Posterior vena cava (tissue), 2 donors: ENCODE measurements at regions of chr3 and their contacts with region 1.

Region 1: GRCh38 chr3:129942296-129942695 is 32.2 kb upstream of the TRH start:
- DNase-seq: no peak

Region 2: DNA sequence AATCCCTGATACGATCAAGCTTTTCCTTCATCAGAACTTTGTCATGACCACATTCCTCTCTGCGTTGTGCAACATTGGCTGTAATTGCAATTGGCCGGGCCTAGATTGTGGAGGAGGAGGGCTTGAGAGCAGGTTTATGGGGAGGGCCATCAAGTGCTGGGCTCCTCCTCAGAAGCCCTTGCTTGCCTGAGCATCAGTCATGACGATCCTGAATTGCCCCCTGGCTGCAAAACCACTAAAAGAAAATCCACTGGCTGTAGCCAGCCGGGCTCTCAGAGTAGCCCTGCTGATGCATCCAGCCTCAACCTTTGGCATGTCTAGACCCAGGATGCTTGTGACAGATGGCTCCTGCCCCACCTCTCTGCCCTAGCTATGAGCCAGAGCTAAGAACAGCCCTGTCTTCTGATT is 18.8 kb after region 1 on chr3:
- intact Hi-C with region 1: no loop called
- DNase-seq: no peak

Region 3: GRCh38 chr3:130093741-130094391 is 151.6 kb after region 1 on chr3:
- intact Hi-C with region 1: loop called in 1 of 2 experiments (anchors 10 kb)
- DNase-seq: peak; percentile 68